B cell (primary cell): ENCODE measurements at regions of chr3 and their contacts with region 1.

Region 1: DNA sequence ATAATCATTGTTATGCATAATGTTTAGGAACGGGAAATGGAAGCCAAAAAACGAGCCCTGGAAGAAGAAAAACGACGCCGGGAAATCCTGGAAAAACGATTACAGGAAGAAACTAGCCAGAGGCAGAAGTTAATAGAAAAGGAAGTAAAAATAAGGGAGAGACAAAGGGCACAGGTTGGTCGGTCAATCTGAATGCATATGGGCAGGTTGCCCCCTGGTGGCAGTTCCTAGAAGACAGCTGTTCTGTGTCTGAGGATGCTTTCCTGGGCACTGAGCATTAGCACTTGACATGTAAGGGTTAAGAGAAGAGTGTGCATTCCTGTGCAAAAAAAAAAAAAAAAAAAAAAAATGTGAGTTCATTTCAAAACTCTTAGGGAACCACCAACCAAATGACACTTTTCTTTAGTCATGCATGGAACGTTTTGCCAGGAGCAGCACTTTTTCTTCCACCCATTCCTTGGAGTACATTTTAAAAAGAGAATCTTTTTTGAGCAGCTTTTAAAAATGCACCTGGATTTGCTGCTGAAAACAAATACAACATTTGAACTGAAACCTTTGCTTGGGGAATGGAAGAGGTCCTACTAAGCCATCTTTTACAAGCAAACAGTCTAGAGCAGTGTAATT is 11.1 kb upstream of the ABHD10 start:
- DNase-seq: peak; percentile 83
- ATAC-seq: peak; percentile 96
- H3K4me3 ChIP-seq: no peak overlapping the region
- H3K4me3 Mint-ChIP-seq: no peak overlapping the region
- H3K27ac ChIP-seq: no peak overlapping the region
- H3K27ac Mint-ChIP-seq: no peak overlapping the region
- H3K4me1 ChIP-seq: peaks cover 2 to 8% of the 10 kb centered on the region in 2 donors
- H3K4me1 Mint-ChIP-seq: peaks cover 4% of the 10 kb centered on the region
- H3K27me3 ChIP-seq: no peaks in the 10 kb centered on the region
- H3K27me3 Mint-ChIP-seq: no peaks in the 10 kb centered on the region
- CTCF ChIP-seq: peak; percentile 96

Region 2: GRCh38 chr3:111577794-111578685 is 389.7 kb before region 1 on chr3:
- CTCF ChIA-PET with region 1: interaction called, 32 read pairs
- POLR2A ChIA-PET with region 1: no interaction called
- intact Hi-C with region 1: loop called (anchors 1 kb)
- DNase-seq: peak; percentile 47
- ATAC-seq: peak; percentile 86
- H3K4me3 ChIP-seq: no peak overlapping the region
- H3K4me3 Mint-ChIP-seq: no peak overlapping the region
- H3K27ac ChIP-seq: no peak overlapping the region
- H3K27ac Mint-ChIP-seq: peak overlapping the region; percentile 59
- H3K4me1 ChIP-seq: peaks cover 9 to 18% of the 10 kb centered on the region in 2 donors
- H3K4me1 Mint-ChIP-seq: peaks cover 31% of the 10 kb centered on the region
- H3K27me3 ChIP-seq: no peaks in the 10 kb centered on the region
- H3K27me3 Mint-ChIP-seq: no peaks in the 10 kb centered on the region
- CTCF ChIP-seq: peak; percentile 55

Region 3: DNA sequence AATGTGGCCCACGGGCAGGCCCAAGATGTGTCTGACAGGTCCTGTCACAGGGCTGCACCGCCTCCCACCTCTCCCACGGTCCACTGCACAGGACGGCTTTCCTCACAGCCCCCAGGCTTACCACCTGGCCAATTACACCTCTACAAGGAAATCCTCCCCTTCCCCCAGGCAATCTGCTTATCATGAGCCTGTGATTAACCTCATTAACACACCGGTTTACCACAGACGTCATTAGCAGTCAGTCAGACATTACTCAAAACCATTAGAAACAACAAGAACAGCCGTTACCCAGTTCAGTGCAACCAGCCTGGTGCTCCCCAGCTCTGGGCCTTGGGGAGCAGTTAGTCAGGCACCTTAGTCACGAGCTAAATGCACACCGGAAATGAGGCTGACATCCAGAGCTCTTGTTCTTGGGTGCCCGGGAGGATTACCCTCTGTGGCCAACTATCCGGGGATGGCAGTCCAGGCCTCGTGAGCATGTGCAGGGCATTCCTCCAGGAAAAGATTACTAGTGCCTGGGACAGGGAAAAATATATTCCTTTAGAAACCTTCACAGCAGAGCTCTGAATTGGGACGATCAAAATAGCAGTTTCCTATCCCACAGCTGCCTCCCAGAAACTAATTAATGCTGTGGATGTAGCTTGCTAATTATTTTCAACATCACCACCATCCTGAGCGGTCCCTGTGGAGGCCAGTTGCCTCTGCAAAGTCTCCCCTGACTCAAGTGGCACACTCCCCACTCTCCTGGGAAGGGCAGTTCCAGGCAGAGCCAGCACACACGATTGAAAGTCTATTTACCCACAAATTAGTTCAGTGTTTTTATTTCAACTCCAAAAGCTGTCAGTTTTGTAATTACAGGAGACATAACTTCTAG is 255.2 kb before region 1 on chr3:
- CTCF ChIA-PET with region 1: interaction called, 366 read pairs
- POLR2A ChIA-PET with region 1: no interaction called
- intact Hi-C with region 1: loop called (anchors 1 kb)
- DNase-seq: no peak
- ATAC-seq: peak; percentile 57
- H3K4me3 ChIP-seq: no peak overlapping the region
- H3K4me3 Mint-ChIP-seq: no peak overlapping the region
- H3K27ac ChIP-seq: no peak overlapping the region
- H3K27ac Mint-ChIP-seq: peak overlapping the region; percentile 10
- H3K4me1 ChIP-seq: no peaks in the 10 kb centered on the region
- H3K4me1 Mint-ChIP-seq: peaks cover 6% of the 10 kb centered on the region
- H3K27me3 ChIP-seq: no peaks in the 10 kb centered on the region
- H3K27me3 Mint-ChIP-seq: no peaks in the 10 kb centered on the region
- CTCF ChIP-seq: no peak

Region 4: GRCh38 chr3:111978493-111979433 is 11.0 kb after region 1 on chr3 and contains the start of gene ABHD10:
- CTCF ChIA-PET with region 1: interaction called, 54 read pairs
- POLR2A ChIA-PET with region 1: no interaction called
- intact Hi-C with region 1: no loop called
- DNase-seq: peak; percentile 98
- ATAC-seq: peak; percentile 94
- H3K4me3 ChIP-seq: peak within 1 kb of the TSS; percentile 84 to 95 (median 84)
- H3K4me3 Mint-ChIP-seq: peak within 1 kb of the TSS; percentile 91
- H3K27ac ChIP-seq: peak within 1 kb of the TSS; percentile 72 to 75
- H3K27ac Mint-ChIP-seq: peak within 1 kb of the TSS; percentile 92
- H3K4me1 ChIP-seq: peaks cover 26 to 29% of the 10 kb centered on the region in 2 donors
- H3K4me1 Mint-ChIP-seq: peaks cover 38% of the 10 kb centered on the region
- H3K27me3 ChIP-seq: no peaks in the 10 kb centered on the region
- H3K27me3 Mint-ChIP-seq: no peaks in the 10 kb centered on the region
- CTCF ChIP-seq: no peak
- total RNA-seq, gene ABHD10: 40.1 and 43.2 TPM in 2 replicates

Region 5: DNA sequence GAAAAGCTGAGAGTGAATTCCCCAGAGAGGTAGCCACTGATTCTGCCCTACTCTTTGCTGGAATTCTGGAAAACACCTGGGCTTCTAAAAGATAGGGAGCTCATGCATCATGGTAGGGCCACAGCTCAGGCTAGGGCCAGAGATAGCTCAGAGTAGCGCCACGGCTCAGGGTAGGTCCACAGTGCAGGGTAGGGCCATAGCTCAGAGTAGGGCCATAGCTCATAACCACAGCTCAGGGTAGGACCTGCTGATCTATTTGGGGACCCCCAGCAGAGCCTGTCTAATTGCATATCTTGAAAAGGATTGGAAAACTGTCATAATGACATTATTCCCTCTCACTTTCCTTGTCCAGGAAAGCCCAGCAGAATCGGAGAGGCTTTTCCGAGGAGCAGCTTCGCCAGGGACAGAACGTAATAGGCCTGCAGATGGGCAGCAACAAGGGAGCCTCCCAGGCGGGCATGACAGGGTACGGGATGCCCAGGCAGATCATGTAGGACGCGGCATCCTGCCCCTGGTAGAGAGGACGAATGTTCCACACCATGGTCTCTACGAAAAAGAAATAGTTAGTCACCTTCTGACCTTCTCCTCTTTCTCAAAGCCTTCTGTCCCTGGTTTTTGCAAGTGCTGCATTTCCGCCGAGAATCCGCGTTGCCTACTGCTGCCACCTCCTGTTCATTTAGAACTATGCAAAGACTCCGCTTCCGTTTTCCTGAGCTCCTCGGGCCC is 45.5 kb after region 1 on chr3:
- CTCF ChIA-PET with region 1: interaction called, 33 read pairs
- POLR2A ChIA-PET with region 1: no interaction called
- intact Hi-C with region 1: no loop called
- DNase-seq: peak; percentile 66
- ATAC-seq: peak; percentile 77
- H3K4me3 ChIP-seq: no peak overlapping the region
- H3K4me3 Mint-ChIP-seq: no peak overlapping the region
- H3K27ac ChIP-seq: no peak overlapping the region
- H3K27ac Mint-ChIP-seq: no peak overlapping the region
- H3K4me1 ChIP-seq: peaks cover 0 to 3% of the 10 kb centered on the region in 2 donors
- H3K4me1 Mint-ChIP-seq: peaks cover 9% of the 10 kb centered on the region
- H3K27me3 ChIP-seq: no peaks in the 10 kb centered on the region
- H3K27me3 Mint-ChIP-seq: no peaks in the 10 kb centered on the region
- CTCF ChIP-seq: peak; percentile 81

Region 6: GRCh38 chr3:112092496-112093179 is 124.9 kb after region 1 on chr3:
- CTCF ChIA-PET with region 1: no interaction called
- POLR2A ChIA-PET with region 1: no interaction called
- intact Hi-C with region 1: no loop called
- DNase-seq: peak; percentile 29
- ATAC-seq: peak; percentile 76
- H3K4me3 ChIP-seq: no peak overlapping the region
- H3K4me3 Mint-ChIP-seq: peak overlapping the region; percentile 20
- H3K27ac ChIP-seq: no peak overlapping the region
- H3K27ac Mint-ChIP-seq: peak overlapping the region; percentile 39
- H3K4me1 ChIP-seq: peaks cover 19 to 22% of the 10 kb centered on the region in 2 donors
- H3K4me1 Mint-ChIP-seq: peaks cover 31% of the 10 kb centered on the region
- H3K27me3 ChIP-seq: peaks cover 0 to 15% (median 10%) of the 10 kb centered on the region in 4 experiments
- H3K27me3 Mint-ChIP-seq: peaks cover 18% of the 10 kb centered on the region
- CTCF ChIP-seq: no peak